A549 (cell line): ENCODE measurements at regions of chr11 and their contacts with region 1.

Region 1: GRCh38 chr11:33829433-33830141 is 55.3 kb upstream of the FBXO3 start:
- DNase-seq: peak; percentile 73 to 81
- ATAC-seq: peak; percentile 88 to 95
- H3K4me3 ChIP-seq: peak overlapping the region; percentile 49
- H3K27ac ChIP-seq: peak overlapping the region; percentile 38 to 75; a peak in 5 of 6 replicates
- H3K4me1 ChIP-seq: no peaks in the 10 kb centered on the region
- CTCF ChIP-seq: peak; percentile 90
- EP300 ChIP-seq: no peak
- POLR2A ChIP-seq: no peak
- RAD21 ChIP-seq: peak; percentile 91 to 94

Region 2: DNA sequence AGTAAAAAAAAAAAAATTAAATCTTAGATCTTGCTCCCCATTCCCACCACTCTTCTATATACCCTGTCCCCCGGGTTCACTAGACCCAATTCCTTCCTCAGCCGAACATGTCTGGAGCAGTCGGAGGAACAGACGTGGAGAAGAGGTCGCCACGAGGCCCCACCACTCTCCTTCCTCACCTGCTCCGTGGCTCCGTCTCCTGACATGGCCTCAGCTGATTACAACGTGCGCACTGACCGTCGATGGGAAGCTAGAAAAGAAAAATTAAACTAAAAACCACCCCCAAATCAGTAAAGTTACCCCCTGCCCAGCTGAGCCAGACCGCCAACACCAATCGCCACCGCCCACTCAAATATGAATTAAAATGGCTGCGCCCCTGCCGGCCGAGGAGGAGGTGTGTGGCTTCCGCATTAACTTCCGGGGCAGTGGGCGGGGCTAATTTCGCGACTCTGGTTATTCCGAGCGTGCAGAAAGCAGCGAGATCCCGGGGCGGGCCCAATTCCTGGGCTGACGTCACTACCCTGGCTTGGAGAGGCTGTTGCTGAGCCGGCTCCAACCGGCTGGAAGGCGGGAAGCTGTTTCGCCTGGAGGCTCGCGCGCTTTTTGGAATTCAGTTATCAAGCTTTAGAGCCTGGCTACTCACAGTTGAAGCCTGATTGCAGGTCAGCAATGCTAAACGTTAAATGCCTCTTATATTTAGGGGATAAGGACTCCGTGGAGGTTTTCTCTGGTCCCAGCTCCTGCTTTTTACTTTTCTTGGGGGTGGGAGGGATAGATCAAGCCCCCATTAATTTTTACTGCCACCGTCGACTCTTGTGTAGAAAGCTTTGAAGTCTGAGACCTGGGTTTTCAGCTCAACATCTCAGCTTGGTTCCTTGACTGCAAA is 668.2 kb before region 1 on chr11 and contains the start of gene CSTF3:
- CTCF ChIA-PET with region 1: interaction called, 16 read pairs
- POLR2A ChIA-PET with region 1: no interaction called
- DNase-seq: peak; percentile 92 to 99
- ATAC-seq: peak; percentile 97 to 98
- H3K4me3 ChIP-seq: peak within 1 kb of the TSS; percentile 77
- H3K27ac ChIP-seq: peak within 1 kb of the TSS; percentile 85 to 87
- H3K4me1 ChIP-seq: peaks cover 36% of the 10 kb centered on the region
- CTCF ChIP-seq: no peak
- EP300 ChIP-seq: no peak
- POLR2A ChIP-seq: peak; percentile 43
- RAD21 ChIP-seq: no peak
- polyA plus RNA-seq, gene CSTF3: 41.4 and 53.9 TPM in 2 replicates

Region 3: GRCh38 chr11:33769542-33769941 is 60.0 kb before region 1 on chr11:
- CTCF ChIA-PET with region 1: no interaction called
- POLR2A ChIA-PET with region 1: no interaction called
- DNase-seq: no peak
- ATAC-seq: no peak
- H3K4me3 ChIP-seq: no peak overlapping the region
- H3K27ac ChIP-seq: no peak overlapping the region
- H3K4me1 ChIP-seq: peaks cover 17% of the 10 kb centered on the region; the same call in 2 of the 3 replicates
- CTCF ChIP-seq: no peak
- EP300 ChIP-seq: no peak
- POLR2A ChIP-seq: no peak
- RAD21 ChIP-seq: no peak

Region 4: GRCh38 chr11:33802414-33802950 is 27.1 kb before region 1 on chr11:
- CTCF ChIA-PET with region 1: interaction called, 239 read pairs
- POLR2A ChIA-PET with region 1: no interaction called
- DNase-seq: peak; percentile 70 to 81
- ATAC-seq: peak; percentile 97 to 98
- H3K4me3 ChIP-seq: peak overlapping the region; percentile 40
- H3K27ac ChIP-seq: peak overlapping the region; percentile 34 to 76; a peak in 4 of 6 replicates
- H3K4me1 ChIP-seq: 0 out of 3 replicates have a peak, but pooled peaks cover 5% of the 10 kb centered on the region
- CTCF ChIP-seq: no peak
- EP300 ChIP-seq: no peak
- POLR2A ChIP-seq: no peak
- RAD21 ChIP-seq: no peak; a peak in 1 of 5 replicates

Region 5: DNA sequence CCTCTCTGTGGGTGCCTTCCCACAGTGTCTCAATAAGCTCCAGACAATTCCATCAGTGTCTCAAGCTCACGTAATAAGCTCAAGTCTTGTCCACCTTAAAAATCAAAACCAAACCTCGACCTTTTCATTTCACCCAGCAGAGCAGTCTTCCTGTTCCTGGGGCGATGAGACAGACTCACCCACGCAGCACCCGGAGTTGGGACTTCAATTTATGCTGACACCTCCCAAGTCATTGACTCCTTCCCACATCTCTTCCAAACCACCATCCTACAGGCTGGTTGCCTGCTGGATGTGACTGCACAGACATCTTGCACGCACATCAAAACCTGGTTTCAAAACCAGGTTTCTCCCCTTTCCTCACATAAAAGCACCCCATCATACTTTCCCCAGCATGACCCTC is 10.3 kb before region 1 on chr11:
- CTCF ChIA-PET with region 1: interaction called, 66 read pairs
- POLR2A ChIA-PET with region 1: no interaction called
- DNase-seq: no peak
- ATAC-seq: no peak
- H3K4me3 ChIP-seq: no peak overlapping the region
- H3K27ac ChIP-seq: no peak overlapping the region
- H3K4me1 ChIP-seq: no peaks in the 10 kb centered on the region
- CTCF ChIP-seq: no peak
- EP300 ChIP-seq: no peak
- POLR2A ChIP-seq: no peak
- RAD21 ChIP-seq: no peak

Region 6: DNA sequence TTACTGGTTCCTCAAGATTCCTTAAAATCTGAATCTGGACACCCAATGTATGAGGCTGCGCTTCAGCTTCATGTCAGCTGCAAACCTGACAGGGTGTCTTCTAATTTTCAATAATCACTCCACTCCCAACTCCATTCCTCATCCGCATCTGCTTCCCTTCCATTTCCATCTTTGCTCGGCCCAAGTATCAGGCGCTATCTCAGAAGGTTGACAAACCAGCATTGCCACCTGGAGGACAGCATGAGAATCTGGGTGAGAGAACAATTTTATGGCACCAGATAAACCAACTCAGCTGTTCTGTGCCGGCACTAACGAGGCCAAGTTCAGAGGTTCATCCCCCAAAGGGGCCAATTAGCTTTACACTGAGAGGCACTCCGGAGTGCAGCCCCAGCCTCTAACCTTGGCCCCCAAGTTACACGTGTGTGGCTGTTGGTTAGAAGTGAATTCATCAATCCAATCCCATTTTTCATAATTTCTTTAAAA is 141.4 kb after region 1 on chr11:
- CTCF ChIA-PET with region 1: interaction called, 36 read pairs
- POLR2A ChIA-PET with region 1: no interaction called
- DNase-seq: peak; percentile 55 to 66
- ATAC-seq: peak; percentile 89 to 97
- H3K4me3 ChIP-seq: no peak overlapping the region
- H3K27ac ChIP-seq: no peak overlapping the region
- H3K4me1 ChIP-seq: no peaks in the 10 kb centered on the region
- CTCF ChIP-seq: peak; percentile 76
- EP300 ChIP-seq: no peak
- POLR2A ChIP-seq: no peak
- RAD21 ChIP-seq: peak; percentile 84 to 92